MCF 10A (cell line): ENCODE measurements at regions of chr20 and their contacts with region 1.

Region 1: GRCh38 chr20:20680991-20681508 is 31.4 kb downstream of the RALGAPA2 start:
- DNase-seq: no peak
- H3K4me3 Mint-ChIP-seq: no peak overlapping the region
- H3K27ac Mint-ChIP-seq: no peak overlapping the region
- H3K4me1 Mint-ChIP-seq: peaks cover 25% of the 10 kb centered on the region
- H3K27me3 Mint-ChIP-seq: no peaks in the 10 kb centered on the region
- CTCF ChIP-seq: no peak

Region 2: GRCh38 chr20:20614391-20614790 is 66.7 kb before region 1 on chr20:
- CTCF ChIA-PET with region 1: no interaction called
- POLR2A ChIA-PET with region 1: no interaction called
- intact Hi-C with region 1: no loop called
- DNase-seq: no peak
- H3K4me3 Mint-ChIP-seq: no peak overlapping the region
- H3K27ac Mint-ChIP-seq: peak overlapping the region; percentile 21
- H3K4me1 Mint-ChIP-seq: no peaks in the 10 kb centered on the region
- H3K27me3 Mint-ChIP-seq: no peaks in the 10 kb centered on the region
- CTCF ChIP-seq: no peak

Region 3: GRCh38 chr20:20664795-20665589 is 16.1 kb before region 1 on chr20:
- CTCF ChIA-PET with region 1: interaction called, 24 read pairs
- POLR2A ChIA-PET with region 1: interaction called, 4 read pairs
- intact Hi-C with region 1: no loop called
- DNase-seq: peak; percentile 51
- H3K4me3 Mint-ChIP-seq: no peak overlapping the region
- H3K27ac Mint-ChIP-seq: no peak overlapping the region
- H3K4me1 Mint-ChIP-seq: no peaks in the 10 kb centered on the region
- H3K27me3 Mint-ChIP-seq: no peaks in the 10 kb centered on the region
- CTCF ChIP-seq: peak; percentile 75